ENCODE measurements at regions of chr2 and their contacts with region 1.

Region 1: GRCh38 chr2:104872866-104873688 is 19.2 kb downstream of the POU3F3 start:
- DNase-seq: peak; percentile 59 to 94 (median 92)
- H3K4me3 ChIP-seq: peak overlapping the region; percentile 47 to 82 (median 71)
- H3K27ac ChIP-seq: peak overlapping the region; percentile 68 to 99 (median 95)
- H3K27me3 ChIP-seq: peaks cover 0 to 8% (median 0%) of the 10 kb centered on the region in 45 donors
- CTCF ChIP-seq: peak; percentile 34 to 93 (median 80)

Region 2: GRCh38 chr2:103959174-103960128 is 913.6 kb before region 1 on chr2:
- intact Hi-C with region 1: loop called (anchors 5 to 10 kb)
- DNase-seq: peak; percentile 9 to 81 (median 67)
- H3K4me3 ChIP-seq: peak overlapping the region in 8 of 59 donors; percentile 1 to 18 (median 6)
- H3K27ac ChIP-seq: no peak overlapping the region
- H3K27me3 ChIP-seq: no peaks in the 10 kb centered on the region
- CTCF ChIP-seq: peak; percentile 58 to 87 (median 76)

Region 3: GRCh38 chr2:104028061-104028460 is 845.0 kb before region 1 on chr2:
- intact Hi-C with region 1: loop called in 1 of 2 experiments (anchors 5 kb)
- DNase-seq: no peak
- H3K4me3 ChIP-seq: peak overlapping the region in 33 of 59 donors; percentile 1 to 61 (median 28)
- H3K27ac ChIP-seq: no peak overlapping the region
- H3K27me3 ChIP-seq: peaks cover 0 to 31% (median 3%) of the 10 kb centered on the region in 45 donors
- CTCF ChIP-seq: no peak

Region 4: GRCh38 chr2:104447831-104448434 is 425.1 kb before region 1 on chr2:
- intact Hi-C with region 1: loop called in 1 of 2 experiments (anchors 10 kb)
- DNase-seq: no peak
- H3K4me3 ChIP-seq: peak overlapping the region; percentile 7 to 69 (median 50)
- H3K27ac ChIP-seq: peak overlapping the region; percentile 39 to 98 (median 90)
- H3K27me3 ChIP-seq: no peaks in the 10 kb centered on the region
- CTCF ChIP-seq: peak; percentile 21 to 75 (median 59)

Region 5: DNA sequence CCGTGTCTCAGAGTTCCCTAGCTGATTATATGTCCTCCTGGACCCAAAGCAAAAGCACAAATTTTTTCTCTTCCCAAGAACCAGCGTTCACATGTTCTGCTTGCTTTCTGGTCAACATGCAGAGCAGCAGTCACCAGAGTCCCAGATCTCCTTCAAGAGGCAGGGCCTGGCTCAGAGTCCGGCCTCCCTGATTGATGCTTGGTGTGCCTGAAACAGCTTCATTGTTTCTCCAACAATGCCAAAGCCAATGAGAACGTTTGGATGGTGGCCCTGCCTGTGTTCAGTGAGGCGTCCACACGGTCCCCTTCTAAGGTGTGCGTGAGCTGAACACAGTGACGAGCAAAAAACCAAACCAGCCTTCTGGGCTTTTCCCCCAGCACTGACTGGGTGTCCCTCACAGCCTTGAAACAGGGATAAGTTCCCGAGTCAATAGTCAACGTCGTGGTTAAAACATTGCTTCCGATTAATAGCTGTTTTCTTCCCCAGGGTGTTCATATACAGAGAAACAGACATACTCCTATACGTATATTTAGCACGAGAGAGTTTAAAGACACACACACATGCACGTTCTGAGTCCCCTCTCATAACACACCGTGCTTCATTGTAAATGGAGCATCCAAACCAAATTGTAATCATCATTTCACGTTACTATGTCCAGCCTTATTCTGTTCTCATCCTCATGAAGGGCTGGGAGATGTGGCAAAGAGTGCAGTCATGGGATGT is 38.5 kb before region 1 on chr2:
- intact Hi-C with region 1: no loop called
- DNase-seq: peak in 8 of 10 donors; percentile 65 to 87 (median 78)
- H3K4me3 ChIP-seq: peak overlapping the region in 47 of 59 donors; percentile 1 to 55 (median 29)
- H3K27ac ChIP-seq: peak overlapping the region in 58 of 59 donors; percentile 21 to 100 (median 83)
- H3K27me3 ChIP-seq: no peaks in the 10 kb centered on the region
- CTCF ChIP-seq: peak in 2 of 56 donors; percentile 14 to 33

Region 6: GRCh38 chr2:104944495-104944894 is 71.4 kb after region 1 on chr2:
- intact Hi-C with region 1: loop called (anchors 5 to 10 kb)
- DNase-seq: peak in 1 of 10 donors; percentile 28
- H3K4me3 ChIP-seq: peak overlapping the region in 1 of 59 donors; percentile 8
- H3K27ac ChIP-seq: peak overlapping the region in 54 of 59 donors; percentile 41 to 98 (median 90)
- H3K27me3 ChIP-seq: no peaks in the 10 kb centered on the region
- CTCF ChIP-seq: peak; percentile 21 to 87 (median 60)

Region 7: GRCh38 chr2:105037572-105038382 is 164.7 kb after region 1 on chr2 and contains the start of gene MRPS9:
- intact Hi-C with region 1: loop called in 1 of 2 experiments (anchors 10 kb)
- DNase-seq: peak; percentile 99
- H3K4me3 ChIP-seq: peak within 1 kb of the TSS; percentile 69 to 99 (median 92)
- H3K27ac ChIP-seq: peak within 1 kb of the TSS; percentile 43 to 95 (median 84)
- H3K27me3 ChIP-seq: no peaks in the 10 kb centered on the region
- CTCF ChIP-seq: peak in 31 of 56 donors; percentile 2 to 57 (median 26)
- total RNA-seq, gene MRPS9: 10.9 to 29.3 (median 20.1) TPM